ENCODE measurements at regions of chr5 and their contacts with region 1.

Region 1: DNA sequence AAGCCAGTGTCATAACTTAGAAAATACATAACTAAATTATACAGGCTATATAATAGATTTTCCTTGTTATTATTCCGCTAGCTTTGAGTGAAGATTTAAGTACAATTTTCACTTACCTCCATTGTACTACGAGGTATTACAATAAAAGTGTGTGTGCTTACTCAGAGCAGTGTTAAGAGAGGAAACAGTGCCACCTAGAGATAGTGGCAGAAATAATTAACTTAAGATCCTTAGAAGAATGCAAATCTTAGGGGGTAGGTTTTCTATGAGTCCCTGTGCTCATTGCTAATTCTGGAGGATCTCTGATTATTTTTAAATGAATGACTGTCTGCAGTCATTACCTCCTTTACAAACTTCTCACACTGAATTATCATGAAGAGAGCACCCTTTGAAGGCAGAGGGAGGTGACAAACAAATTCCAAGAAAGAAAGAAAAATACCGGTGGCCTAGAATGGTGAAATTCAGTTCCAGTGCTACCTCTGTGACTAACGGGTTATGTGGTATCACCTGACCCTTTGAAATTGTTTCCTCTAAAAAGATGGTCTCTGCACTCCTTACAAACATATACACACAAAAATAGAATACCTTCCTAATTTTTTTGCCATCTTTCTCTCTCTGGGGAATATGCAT is 379.8 kb downstream of the TRIM36 start:
- DNase-seq: no peak
- H3K4me3 ChIP-seq: no peak overlapping the region
- H3K27ac ChIP-seq: no peak overlapping the region
- H3K4me1 ChIP-seq: no peaks in the 10 kb centered on the region
- H3K27me3 ChIP-seq: no peaks in the 10 kb centered on the region
- CTCF ChIP-seq: peak; percentile 34 to 58 (median 48)
- POLR2A ChIP-seq: no peak

Region 2: GRCh38 chr5:114101153-114101552 is 688.7 kb before region 1 on chr5:
- intact Hi-C with region 1: loop called in 1 of 2 experiments (anchors 5 kb)
- DNase-seq: peak; percentile 20 to 57 (median 41)
- H3K4me3 ChIP-seq: no peak overlapping the region
- H3K27ac ChIP-seq: no peak overlapping the region
- H3K4me1 ChIP-seq: no peaks in the 10 kb centered on the region
- H3K27me3 ChIP-seq: no peaks in the 10 kb centered on the region
- CTCF ChIP-seq: peak; percentile 31 to 73 (median 52)
- POLR2A ChIP-seq: no peak

Region 3: GRCh38 chr5:114361724-114362196 is 428.1 kb before region 1 on chr5 and contains the start of gene KCNN2:
- intact Hi-C with region 1: loop called in 1 of 2 experiments (anchors 5 kb)
- DNase-seq: peak; percentile 94 to 97 (median 96)
- H3K4me3 ChIP-seq: peak within 1 kb of the TSS; percentile 43 to 84 (median 57)
- H3K27ac ChIP-seq: peak within 1 kb of the TSS in 4 of 5 donors; percentile 54 to 81 (median 72)
- H3K4me1 ChIP-seq: peaks cover 9 to 30% of the 10 kb centered on the region in 2 donors
- H3K27me3 ChIP-seq: peaks cover 6% of the 10 kb centered on the region
- CTCF ChIP-seq: no peak
- POLR2A ChIP-seq: peak in 1 of 2 donors; percentile 81
- total RNA-seq, gene KCNN2: 18.5 to 62.7 (median 43.7) TPM

Measured in adrenal gland (tissue), 19 donors.